Colonic mucosa (tissue), 4 donors: ENCODE measurements at regions of chr15 and their contacts with region 1.

Region 1: DNA sequence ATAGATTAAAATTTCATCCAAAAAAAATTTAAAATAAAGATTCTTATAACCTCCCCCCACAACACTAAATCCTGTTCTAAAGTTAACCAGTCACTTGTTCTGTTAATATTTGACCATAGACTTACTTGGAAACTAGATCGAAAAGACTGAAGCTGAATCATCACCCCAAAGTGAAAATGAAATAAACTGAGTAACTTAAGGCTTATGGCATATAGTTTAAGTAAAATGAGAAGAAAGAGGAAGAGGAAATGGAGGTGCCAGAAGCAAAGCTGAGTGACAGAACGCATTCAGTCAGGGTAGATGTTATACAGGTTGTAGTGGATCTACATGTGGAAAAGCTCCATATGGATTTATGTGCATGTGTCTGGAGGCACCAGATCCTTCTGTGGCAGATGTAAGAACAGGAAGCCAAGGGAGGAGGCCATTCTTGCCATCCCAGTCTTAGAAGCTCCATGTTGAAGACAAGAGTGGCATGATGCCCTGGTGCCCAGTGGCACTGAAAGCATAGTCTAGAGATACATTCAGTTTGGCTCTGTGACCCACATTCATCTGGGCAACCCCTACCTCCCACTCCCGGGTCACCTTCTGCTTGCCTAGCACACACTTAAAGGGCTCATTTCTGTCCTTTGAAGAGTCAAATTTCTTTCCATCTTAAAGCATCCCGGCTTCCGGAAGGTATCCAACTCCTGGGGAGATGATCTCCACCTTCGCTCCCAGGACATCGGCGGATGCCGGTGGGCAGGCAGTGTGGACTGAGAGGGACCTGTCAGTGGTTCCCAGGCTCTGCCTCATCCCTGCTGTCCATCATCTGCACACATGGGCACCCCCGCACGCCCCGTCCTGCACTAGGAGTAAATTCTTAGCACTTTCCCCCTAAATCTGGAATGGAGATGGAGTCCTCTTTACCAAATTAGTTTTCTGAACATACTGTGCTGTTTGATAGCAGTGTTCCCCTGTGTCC is 90.8 kb downstream of the NEO1 start:
- DNase-seq: no peak
- H3K4me3 ChIP-seq: no peak overlapping the region
- H3K27ac ChIP-seq: no peak overlapping the region
- H3K4me1 ChIP-seq: no peaks in the 10 kb centered on the region
- H3K27me3 ChIP-seq: no peaks in the 10 kb centered on the region
- CTCF ChIP-seq: no peak

Region 2: DNA sequence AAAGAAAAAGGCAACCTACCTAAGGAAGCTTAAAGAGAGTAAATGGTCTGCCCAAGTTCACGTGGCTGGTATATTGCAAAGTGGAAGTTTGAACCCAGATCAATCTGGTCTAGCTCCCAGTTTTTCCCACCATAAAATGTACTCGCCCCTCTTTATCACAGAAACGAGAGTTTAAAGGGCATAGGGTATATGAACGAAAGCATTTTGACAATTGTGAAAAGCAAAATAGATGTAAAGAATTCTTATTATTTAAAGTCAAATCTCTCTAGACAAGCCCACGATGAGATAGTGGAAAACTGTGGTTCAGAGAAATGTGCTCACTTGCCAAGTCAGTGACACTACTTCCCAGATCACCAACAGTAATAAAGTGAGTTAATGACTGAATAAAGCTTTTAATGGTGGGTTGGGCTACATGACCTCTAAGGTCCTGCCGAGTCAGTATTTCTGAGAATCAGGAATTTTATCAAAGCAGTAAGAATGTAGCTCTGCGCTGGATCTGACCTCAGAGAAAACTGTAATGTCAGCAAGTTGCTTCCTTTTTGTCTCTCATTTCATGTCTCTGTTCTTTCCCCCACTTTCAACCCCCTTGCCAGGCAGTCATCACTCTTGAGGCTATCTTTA is 114.1 kb before region 1 on chr15:
- intact Hi-C with region 1: no loop called
- DNase-seq: no peak
- H3K4me3 ChIP-seq: no peak overlapping the region
- H3K27ac ChIP-seq: no peak overlapping the region
- H3K4me1 ChIP-seq: no peaks in the 10 kb centered on the region
- H3K27me3 ChIP-seq: no peaks in the 10 kb centered on the region
- CTCF ChIP-seq: no peak

Region 3: DNA sequence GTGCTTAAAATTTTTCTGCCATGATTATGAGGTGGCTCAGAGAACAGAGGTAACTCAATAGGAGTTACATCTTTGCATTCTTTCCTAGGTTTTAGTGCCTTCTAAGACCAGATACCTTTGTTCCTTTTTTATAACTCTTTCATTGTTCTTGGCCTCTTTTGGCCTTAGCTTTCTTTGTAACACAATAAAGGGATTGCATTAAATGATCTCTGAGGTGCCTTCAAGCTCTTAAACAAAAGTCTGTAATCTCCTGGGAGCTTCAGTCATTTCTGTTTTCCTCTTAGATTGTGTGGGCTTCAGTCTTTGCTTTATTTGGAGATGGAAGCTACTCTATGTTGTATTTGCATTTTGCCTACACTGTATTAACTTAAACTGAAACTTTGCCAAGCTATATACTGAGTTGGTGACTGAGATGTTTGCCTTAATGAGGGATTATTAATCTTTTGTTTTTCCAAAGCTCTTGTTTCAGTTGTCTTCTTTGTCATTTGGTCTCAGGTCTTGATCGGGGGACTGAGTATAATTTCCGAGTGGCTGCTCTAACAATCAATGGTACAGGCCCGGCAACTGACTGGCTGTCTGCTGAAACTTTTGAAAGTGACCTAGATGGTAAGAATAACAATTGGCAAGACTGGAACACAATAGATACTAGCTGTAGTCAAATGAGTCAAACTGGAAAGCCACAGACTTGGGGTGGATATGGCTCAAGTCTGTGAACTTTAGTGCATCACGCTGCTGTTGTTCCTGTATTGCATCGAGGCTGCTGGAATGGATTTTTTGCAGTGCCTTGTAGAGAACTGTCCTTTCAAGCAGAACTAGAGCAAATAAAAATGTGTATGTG is 115.4 kb after region 1 on chr15:
- intact Hi-C with region 1: loop called (anchors 10 kb)
- DNase-seq: no peak
- H3K4me3 ChIP-seq: no peak overlapping the region
- H3K27ac ChIP-seq: no peak overlapping the region
- H3K4me1 ChIP-seq: no peaks in the 10 kb centered on the region
- H3K27me3 ChIP-seq: no peaks in the 10 kb centered on the region
- CTCF ChIP-seq: no peak